AG04450 (cell line): ENCODE measurements at regions of chr9 and their contacts with region 1.

Region 1: GRCh38 chr9:77960356-77961153 is 71.1 kb downstream of the GNAQ start:
- DNase-seq: no peak
- H3K4me3 ChIP-seq: no peak overlapping the region
- H3K27ac ChIP-seq: no peak overlapping the region
- H3K27me3 ChIP-seq: no peaks in the 10 kb centered on the region
- CTCF ChIP-seq: no peak

Region 2: GRCh38 chr9:77977210-77977611 is 16.7 kb after region 1 on chr9:
- CTCF ChIA-PET with region 1: interaction called, 11 read pairs
- POLR2A ChIA-PET with region 1: no interaction called
- DNase-seq: no peak
- H3K4me3 ChIP-seq: no peak overlapping the region
- H3K27ac ChIP-seq: no peak overlapping the region
- H3K27me3 ChIP-seq: no peaks in the 10 kb centered on the region
- CTCF ChIP-seq: peak; percentile 51

Region 3: GRCh38 chr9:78023003-78023741 is 62.6 kb after region 1 on chr9:
- CTCF ChIA-PET with region 1: no interaction called
- POLR2A ChIA-PET with region 1: no interaction called
- DNase-seq: peak; percentile 47
- H3K4me3 ChIP-seq: peak overlapping the region; percentile 25
- H3K27ac ChIP-seq: peak overlapping the region; percentile 58
- H3K27me3 ChIP-seq: no peaks in the 10 kb centered on the region
- CTCF ChIP-seq: no peak